Transverse colon (tissue), 4 donors: ENCODE measurements at regions of chr16 and their contacts with region 1.

Region 1: GRCh38 chr16:24800586-24800985 is 45.2 kb upstream of the SLC5A11 start:
- DNase-seq: no peak
- H3K4me3 ChIP-seq: no peak overlapping the region
- H3K27ac ChIP-seq: no peak overlapping the region
- H3K4me1 ChIP-seq: no peaks in the 10 kb centered on the region
- H3K27me3 ChIP-seq: no peaks in the 10 kb centered on the region
- CTCF ChIP-seq: no peak
- EP300 ChIP-seq: no peak
- POLR2A ChIP-seq: no peak

Region 2: DNA sequence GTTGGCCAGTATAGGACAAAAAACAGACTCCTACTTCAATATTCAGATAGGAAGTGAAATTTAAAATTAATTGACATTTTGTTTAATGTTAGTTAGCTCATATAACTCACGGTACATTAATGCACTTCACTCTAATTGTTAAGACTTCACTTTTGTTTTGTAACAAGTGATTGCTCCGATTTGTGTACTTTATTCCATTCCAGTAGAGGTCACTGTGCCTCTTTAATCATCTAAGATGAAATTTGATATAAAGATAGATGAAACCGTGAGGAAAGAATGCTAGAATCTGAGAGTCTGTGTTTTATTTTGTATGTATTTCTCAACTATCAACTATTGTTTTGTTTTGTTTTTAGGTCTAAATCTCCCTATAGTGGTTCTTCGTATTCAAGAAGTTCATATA is 232.2 kb before region 1 on chr16:
- in situ Hi-C with region 1: loop called in 1 of 4 experiments (anchors 25 kb)
- intact Hi-C with region 1: no loop called
- DNase-seq: no peak
- H3K4me3 ChIP-seq: no peak overlapping the region
- H3K27ac ChIP-seq: no peak overlapping the region
- H3K4me1 ChIP-seq: no peaks in the 10 kb centered on the region
- H3K27me3 ChIP-seq: no peaks in the 10 kb centered on the region
- CTCF ChIP-seq: peak in 3 of 5 experiments; percentile 20 to 27 (median 24)
- EP300 ChIP-seq: no peak
- POLR2A ChIP-seq: no peak

Region 3: DNA sequence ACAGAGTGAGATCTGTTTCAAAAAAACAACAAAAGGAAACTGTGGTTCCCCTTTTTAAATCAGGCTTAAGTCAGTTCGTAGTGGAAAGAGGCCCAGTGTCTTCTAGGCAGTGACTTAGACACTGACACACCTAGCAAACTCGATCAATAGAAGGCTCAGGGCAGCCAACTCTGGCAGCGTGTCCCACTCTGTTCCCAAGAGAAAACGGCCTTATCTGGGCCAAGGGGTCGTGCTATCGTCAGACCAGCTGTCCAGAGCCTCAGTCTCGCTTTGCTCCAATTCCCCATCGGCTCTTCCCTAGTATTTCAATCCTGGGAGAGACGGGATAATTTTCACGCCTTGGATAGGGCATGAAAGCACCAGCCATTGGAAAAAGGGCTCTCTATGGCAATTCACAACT is 118.1 kb after region 1 on chr16:
- in situ Hi-C with region 1: no loop called
- intact Hi-C with region 1: no loop called
- DNase-seq: no peak
- H3K4me3 ChIP-seq: no peak overlapping the region
- H3K27ac ChIP-seq: no peak overlapping the region
- H3K4me1 ChIP-seq: no peaks in the 10 kb centered on the region
- H3K27me3 ChIP-seq: no peaks in the 10 kb centered on the region
- CTCF ChIP-seq: no peak
- EP300 ChIP-seq: no peak
- POLR2A ChIP-seq: no peak